ENCODE measurements at regions of chr12 and their contacts with region 1.

Region 1: DNA sequence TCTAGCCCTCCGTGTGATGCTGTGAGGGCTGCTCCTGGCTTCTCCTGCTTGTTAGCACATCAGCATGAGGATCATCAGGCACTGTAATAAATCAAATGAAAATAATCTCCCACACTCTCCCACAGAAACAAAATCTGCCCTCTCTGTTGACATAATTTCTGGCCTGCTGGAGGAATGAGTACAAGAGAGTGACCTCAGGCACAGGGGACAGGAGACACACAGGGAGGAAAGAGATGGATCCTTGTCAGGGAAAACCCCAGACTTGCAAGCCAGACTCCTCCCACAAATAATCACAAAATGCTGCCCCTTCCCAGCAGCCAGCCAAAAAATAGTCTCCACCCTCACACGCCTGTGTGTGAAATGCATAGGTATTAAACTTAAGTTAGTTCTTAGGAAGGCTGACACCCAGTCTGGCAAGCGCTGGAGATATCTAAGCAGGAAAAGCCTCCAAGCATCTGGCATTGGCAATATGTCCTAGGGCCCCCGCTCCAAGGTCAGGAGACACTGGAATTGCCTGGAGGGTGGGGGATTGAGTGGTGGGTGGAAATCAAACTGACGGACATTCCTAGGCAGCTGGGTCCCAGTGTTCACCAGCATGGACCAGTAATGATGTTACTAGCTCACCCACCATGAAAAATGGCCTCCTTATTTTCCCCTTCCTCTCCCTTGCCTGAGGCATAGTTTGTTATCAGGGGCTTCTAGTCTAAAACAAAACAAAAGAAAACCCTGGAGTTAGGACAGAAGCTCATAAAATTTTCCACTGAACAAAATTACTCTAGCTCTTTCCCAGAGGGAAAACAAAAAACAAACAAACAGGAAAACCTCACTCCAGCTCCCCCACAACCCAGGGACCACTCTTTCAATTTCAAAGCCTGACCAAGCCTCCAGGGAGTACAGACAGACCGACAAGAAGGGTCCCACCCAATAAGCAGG is 22.0 kb downstream of the SMUG1 start:
- H3K4me3 ChIP-seq: no peak overlapping the region
- H3K27ac ChIP-seq: peak overlapping the region; percentile 74
- H3K4me1 ChIP-seq: peaks cover 28% of the 10 kb centered on the region
- CTCF ChIP-seq: no peak

Region 2: DNA sequence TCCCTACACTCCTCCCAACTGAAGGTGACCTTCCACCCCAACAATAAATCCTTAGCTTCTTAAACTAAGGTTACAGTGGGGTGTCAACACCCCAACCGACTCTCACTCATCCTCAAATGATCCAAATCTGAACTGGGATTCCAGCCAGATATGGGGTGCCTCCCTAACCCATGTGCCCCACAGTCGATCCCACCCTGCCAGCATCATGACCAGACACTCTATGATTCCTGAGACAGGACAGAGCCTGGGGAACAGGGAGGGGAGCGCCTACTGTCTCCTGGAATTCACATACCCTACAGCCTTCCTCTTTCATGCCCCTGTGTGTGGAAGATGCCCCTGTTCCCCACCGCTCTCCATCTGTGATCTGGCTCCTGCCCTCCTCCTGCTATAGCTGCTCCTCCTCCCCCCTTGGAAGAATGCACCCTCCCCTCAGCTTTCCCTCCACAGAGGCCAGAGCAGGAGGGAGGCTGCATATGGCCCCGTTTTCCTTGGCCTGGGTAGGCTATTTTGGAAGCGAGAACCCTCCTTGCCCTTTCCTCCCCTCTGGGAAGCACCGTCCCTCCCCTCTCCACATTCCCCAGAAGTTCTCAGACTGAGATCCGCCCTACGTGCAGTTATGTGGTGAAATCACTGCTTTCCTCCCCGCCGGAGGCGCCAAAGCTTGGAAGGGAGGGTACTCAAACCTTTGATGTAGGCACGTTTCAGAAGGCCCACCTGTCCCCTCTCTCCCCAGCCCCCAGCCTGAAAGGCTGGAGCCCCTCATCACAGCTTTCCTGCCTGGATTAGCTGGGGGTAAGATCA is 26.0 kb before region 1 on chr12:
- CTCF ChIA-PET with region 1: interaction called, 3 read pairs
- POLR2A ChIA-PET with region 1: interaction called, 11 read pairs
- H3K4me3 ChIP-seq: no peak overlapping the region
- H3K27ac ChIP-seq: no peak overlapping the region
- H3K4me1 ChIP-seq: peaks cover 2% of the 10 kb centered on the region
- CTCF ChIP-seq: no peak